Endothelial cell of umbilical vein (primary cell): ENCODE measurements at regions of chr12 and their contacts with region 1.

Region 1: DNA sequence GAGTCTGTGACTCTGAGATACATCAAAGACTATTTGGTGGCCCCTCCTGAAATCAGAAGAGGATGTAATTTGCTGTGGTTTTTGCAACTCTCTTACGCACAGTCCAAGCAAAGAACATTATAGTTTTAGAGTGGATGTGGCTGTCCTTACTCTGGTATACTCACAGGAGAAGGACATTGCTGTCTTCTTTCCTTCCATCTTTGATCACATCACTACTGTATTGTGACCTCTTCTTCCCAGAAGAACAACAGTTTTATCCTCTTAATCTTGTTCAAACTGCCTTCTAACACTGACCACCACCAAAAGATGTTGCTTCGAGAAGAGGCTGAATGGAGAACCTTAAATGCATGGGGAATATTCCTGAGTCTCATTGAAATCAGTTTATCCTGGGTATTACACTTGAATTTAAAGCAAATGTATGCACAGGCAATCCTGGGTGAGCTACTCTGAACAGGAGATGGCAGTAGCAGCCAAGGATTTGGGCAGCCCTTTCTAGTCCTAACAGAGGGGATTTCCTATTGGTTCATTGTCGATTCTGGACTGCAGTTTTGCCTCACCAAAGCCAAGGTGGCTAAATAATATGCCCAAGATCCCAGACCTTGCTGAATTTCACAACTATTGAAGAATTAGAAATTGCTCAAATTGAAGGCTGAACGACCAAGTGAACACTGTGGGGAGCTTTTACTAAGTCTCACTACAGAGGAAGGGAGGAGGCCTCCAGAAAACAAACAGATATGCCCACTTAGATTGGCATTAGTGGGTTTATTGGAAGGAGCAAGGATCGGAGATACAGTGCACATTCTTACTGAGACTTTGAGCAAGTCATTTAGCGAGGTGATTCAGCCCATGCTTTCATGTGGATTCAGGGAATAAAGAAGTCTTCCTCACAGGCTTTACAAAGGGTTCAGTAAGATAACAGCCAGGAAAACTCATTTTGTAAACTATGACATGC is 282.8 kb downstream of the PAWR start:
- DNase-seq: peak; percentile 88
- H3K4me3 ChIP-seq: no peak overlapping the region
- H3K27ac ChIP-seq: peak overlapping the region; percentile 25
- H3K4me1 ChIP-seq: peaks cover 9% of the 10 kb centered on the region
- H3K27me3 ChIP-seq: no peaks in the 10 kb centered on the region
- CTCF ChIP-seq: peak; percentile 72 to 86
- POLR2A ChIP-seq: no peak

Region 2: GRCh38 chr12:79397609-79398008 is 10.3 kb before region 1 on chr12:
- CTCF ChIA-PET with region 1: interaction called, 10 read pairs
- POLR2A ChIA-PET with region 1: no interaction called
- dilution Hi-C with region 1: no loop called
- intact Hi-C with region 1: no loop called
- DNase-seq: peak; percentile 58
- H3K4me3 ChIP-seq: no peak overlapping the region
- H3K27ac ChIP-seq: no peak overlapping the region
- H3K4me1 ChIP-seq: peaks cover 11% of the 10 kb centered on the region
- H3K27me3 ChIP-seq: no peaks in the 10 kb centered on the region
- CTCF ChIP-seq: no peak
- POLR2A ChIP-seq: no peak

Region 3: GRCh38 chr12:79555028-79555930 is 147.3 kb after region 1 on chr12:
- CTCF ChIA-PET with region 1: no interaction called
- POLR2A ChIA-PET with region 1: no interaction called
- dilution Hi-C with region 1: no loop called
- intact Hi-C with region 1: loop called (anchors 1 kb)
- DNase-seq: peak; percentile 79
- H3K4me3 ChIP-seq: no peak overlapping the region
- H3K27ac ChIP-seq: no peak overlapping the region
- H3K4me1 ChIP-seq: peaks cover 56% of the 10 kb centered on the region
- H3K27me3 ChIP-seq: no peaks in the 10 kb centered on the region
- CTCF ChIP-seq: peak; percentile 43 to 48
- POLR2A ChIP-seq: no peak

Region 4: GRCh38 chr12:79717006-79717405 is 309.1 kb after region 1 on chr12:
- CTCF ChIA-PET with region 1: no interaction called
- POLR2A ChIA-PET with region 1: no interaction called
- dilution Hi-C with region 1: no loop called
- intact Hi-C with region 1: no loop called
- DNase-seq: no peak
- H3K4me3 ChIP-seq: no peak overlapping the region
- H3K27ac ChIP-seq: no peak overlapping the region
- H3K4me1 ChIP-seq: no peaks in the 10 kb centered on the region
- H3K27me3 ChIP-seq: no peaks in the 10 kb centered on the region
- CTCF ChIP-seq: no peak
- POLR2A ChIP-seq: no peak

Region 5: DNA sequence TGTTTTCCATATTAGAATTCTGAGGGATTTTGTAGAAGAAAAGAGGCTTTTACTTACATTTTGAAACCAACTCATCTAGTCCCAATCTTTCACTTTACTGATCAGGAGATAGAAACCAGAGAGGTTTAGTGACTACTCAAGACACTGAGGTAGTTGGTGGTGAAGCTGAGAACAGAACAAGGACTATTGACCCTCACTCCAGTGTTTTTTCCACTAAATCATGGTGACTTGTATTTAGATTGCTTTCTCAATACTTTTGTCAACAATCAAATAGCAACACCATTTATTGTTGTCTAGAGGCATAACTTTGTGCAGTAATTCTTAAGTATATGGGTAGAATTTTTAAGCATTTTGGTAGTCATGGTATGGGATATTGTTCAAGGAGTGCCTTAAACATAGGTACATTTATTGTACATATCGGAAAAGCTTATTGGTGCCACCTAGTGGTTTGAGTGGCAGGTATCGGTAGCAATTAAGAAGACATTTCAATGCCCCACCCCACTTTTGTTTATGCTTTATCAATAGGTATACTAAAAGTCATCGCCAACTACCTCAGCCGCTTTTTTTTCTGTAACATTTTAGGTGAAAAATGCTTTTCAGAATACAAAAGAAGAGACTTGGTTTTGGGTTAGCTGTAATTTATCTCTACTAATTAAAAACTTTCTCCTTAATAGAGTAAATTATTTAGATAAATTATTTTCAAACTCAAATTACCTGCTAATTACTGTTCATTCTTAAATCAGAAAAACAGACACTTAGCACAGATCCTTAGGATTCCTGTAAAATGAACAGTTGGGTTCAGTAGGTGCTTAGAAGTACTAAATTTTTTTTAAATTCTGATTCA is 330.1 kb after region 1 on chr12:
- CTCF ChIA-PET with region 1: interaction called, 12 read pairs
- POLR2A ChIA-PET with region 1: no interaction called
- dilution Hi-C with region 1: no loop called
- intact Hi-C with region 1: loop called (anchors 1 kb)
- DNase-seq: peak; percentile 80
- H3K4me3 ChIP-seq: no peak overlapping the region
- H3K27ac ChIP-seq: no peak overlapping the region
- H3K4me1 ChIP-seq: no peaks in the 10 kb centered on the region
- H3K27me3 ChIP-seq: no peaks in the 10 kb centered on the region
- CTCF ChIP-seq: peak; percentile 48 to 49
- POLR2A ChIP-seq: no peak

Region 6: DNA sequence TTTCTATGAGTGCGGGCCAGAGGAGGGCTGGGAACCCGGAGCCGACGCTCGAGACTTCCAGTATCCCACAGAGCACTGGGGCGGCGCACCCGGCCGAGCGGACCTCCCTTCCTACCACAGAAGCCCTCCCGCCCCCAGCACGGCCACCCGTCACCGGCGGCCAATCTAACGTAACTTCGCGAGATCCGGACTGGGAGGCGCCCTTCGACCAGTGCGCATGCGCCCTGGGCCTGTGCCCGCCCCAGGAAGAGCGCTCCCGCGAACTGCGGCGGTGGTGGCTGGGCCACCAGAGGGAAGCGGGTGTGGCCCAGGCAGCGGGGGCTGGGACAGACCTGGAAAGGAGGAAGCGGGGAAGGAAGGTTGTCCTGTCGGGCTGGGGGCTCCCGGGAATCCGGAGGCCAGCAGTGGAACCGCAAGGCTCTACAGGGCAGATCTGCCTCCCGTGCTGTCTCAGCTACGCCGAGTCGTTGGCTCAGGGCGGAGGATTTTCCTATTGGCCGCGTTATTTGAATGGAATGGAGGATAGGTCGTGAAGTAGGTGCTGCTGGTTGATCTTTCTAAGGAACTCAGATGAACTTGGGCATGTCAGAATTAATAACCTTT is 527.2 kb after region 1 on chr12 and contains the start of gene PPP1R12A:
- CTCF ChIA-PET with region 1: interaction called, 3 read pairs
- POLR2A ChIA-PET with region 1: no interaction called
- dilution Hi-C with region 1: no loop called
- intact Hi-C with region 1: loop called (anchors 2 kb)
- DNase-seq: peak; percentile 99
- H3K4me3 ChIP-seq: peak within 1 kb of the TSS; percentile 69 to 97 (median 84)
- H3K27ac ChIP-seq: peak within 1 kb of the TSS; percentile 82
- H3K4me1 ChIP-seq: peaks cover 22% of the 10 kb centered on the region
- H3K27me3 ChIP-seq: no peaks in the 10 kb centered on the region
- CTCF ChIP-seq: peak in 1 of 2 donors; percentile 14
- POLR2A ChIP-seq: peak; percentile 92
- total RNA-seq, gene PPP1R12A: 83.9 and 86.8 TPM in 2 replicates

Region 7: GRCh38 chr12:80763874-80764273 is 1355.9 kb after region 1 on chr12:
- CTCF ChIA-PET with region 1: no interaction called
- POLR2A ChIA-PET with region 1: no interaction called
- dilution Hi-C with region 1: no loop called
- intact Hi-C with region 1: loop called (anchors 5 kb)
- DNase-seq: peak; percentile 73
- H3K4me3 ChIP-seq: no peak overlapping the region
- H3K27ac ChIP-seq: no peak overlapping the region
- H3K4me1 ChIP-seq: no peaks in the 10 kb centered on the region
- H3K27me3 ChIP-seq: no peaks in the 10 kb centered on the region
- CTCF ChIP-seq: peak; percentile 28 to 38
- POLR2A ChIP-seq: no peak